ENCODE measurements at regions of chr14 and their contacts with region 1.

Region 1: GRCh38 chr14:68392393-68393141 is 400.3 kb downstream of the ZFP36L1 start:
- DNase-seq: no peak

Region 2: DNA sequence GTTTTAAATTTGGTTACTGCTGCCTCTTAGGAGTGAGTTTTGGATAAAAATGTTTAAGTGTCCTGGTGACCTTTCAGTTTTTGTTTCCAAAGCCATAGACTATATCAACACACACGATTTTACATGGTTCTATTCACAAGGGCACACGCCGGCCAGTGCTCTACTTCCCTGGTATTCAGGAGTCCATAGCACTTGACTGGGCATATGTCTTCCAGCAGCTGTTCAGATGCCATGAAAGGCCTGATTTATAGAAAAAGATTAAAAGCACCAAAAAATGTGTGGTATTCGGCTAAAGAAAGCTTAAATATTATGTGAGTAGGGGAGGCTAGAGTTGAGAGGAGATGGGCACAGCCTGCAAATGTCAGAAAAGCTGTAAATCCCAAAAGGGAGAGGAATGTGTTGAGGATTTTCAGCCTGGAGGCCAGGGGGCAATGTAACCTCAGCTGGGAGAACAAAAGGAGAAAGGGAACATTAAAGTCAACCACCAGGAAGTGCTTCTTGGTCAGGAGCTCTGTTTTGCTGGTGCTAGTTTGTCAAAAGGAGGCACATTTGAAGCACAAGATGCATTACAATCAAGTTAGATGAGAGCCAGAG is 94.6 kb before region 1 on chr14:
- intact Hi-C with region 1: loop called (anchors 5 kb)
- DNase-seq: no peak

Measured in cardiac septum (tissue), 1 donor.